CD8-positive, alpha-beta T cell (primary cell): ENCODE measurements at regions of chr4 and their contacts with region 1.

Region 1: GRCh38 chr4:153573881-153574802 is 108.0 kb downstream of the TMEM131L start:
- DNase-seq: peak; percentile 29 to 84 (median 73)
- ATAC-seq: peak; percentile 96
- H3K4me3 ChIP-seq: no peak overlapping the region
- H3K4me3 Mint-ChIP-seq: peak overlapping the region; percentile 9
- H3K27ac ChIP-seq: peak overlapping the region in 1 of 2 experiments; percentile 29
- H3K27ac Mint-ChIP-seq: peak overlapping the region; percentile 81
- H3K4me1 ChIP-seq: peaks cover 27% of the 10 kb centered on the region
- H3K4me1 Mint-ChIP-seq: peaks cover 61% of the 10 kb centered on the region
- H3K27me3 ChIP-seq: no peaks in the 10 kb centered on the region
- H3K27me3 Mint-ChIP-seq: no peaks in the 10 kb centered on the region
- CTCF ChIP-seq: peak; percentile 73

Region 2: DNA sequence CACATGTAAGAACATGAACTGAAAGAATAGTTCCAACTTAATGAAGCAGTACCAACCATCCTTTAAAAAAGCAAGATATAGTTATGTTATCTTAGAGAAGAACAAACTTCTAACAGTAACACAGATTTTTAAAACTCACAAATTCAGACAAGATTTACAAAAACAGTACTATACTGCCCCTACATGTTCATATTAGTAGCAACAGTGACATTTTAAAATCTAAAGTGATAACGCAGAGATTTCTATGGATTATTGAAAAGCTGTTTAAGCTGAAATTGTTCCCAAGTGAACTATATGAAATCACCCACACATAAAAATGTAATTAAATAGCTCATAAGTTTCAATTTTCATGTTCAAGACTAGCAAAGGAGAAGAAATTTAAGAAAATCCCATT is 1204.2 kb before region 1 on chr4:
- CTCF ChIA-PET with region 1: no interaction called
- POLR2A ChIA-PET with region 1: no interaction called
- intact Hi-C with region 1: no loop called
- DNase-seq: peak in 1 of 9 experiments; percentile 26
- ATAC-seq: no peak
- H3K4me3 ChIP-seq: no peak overlapping the region
- H3K4me3 Mint-ChIP-seq: no peak overlapping the region
- H3K27ac ChIP-seq: no peak overlapping the region
- H3K27ac Mint-ChIP-seq: no peak overlapping the region
- H3K4me1 ChIP-seq: no peaks in the 10 kb centered on the region
- H3K4me1 Mint-ChIP-seq: peaks cover 13% of the 10 kb centered on the region
- H3K27me3 ChIP-seq: no peaks in the 10 kb centered on the region
- H3K27me3 Mint-ChIP-seq: no peaks in the 10 kb centered on the region
- CTCF ChIP-seq: peak; percentile 53

Region 3: DNA sequence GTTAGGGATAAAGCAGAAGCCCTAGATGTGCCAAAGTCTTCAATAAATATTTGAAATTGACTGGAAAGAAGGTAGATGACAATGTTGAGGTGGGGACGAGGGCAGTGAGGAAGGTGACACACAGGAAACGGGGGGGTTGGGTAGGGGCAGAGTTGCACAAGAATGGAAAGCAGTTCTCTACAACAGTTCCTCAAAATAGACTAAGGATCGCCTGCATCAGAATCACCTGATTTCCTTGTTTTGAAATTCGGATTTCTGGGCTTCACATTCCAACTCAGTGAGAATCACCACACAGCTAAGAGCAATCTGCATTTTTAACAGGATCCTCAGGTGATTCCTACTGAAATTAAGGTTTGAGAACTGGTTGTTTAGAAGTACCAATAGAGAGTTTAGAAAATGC is 723.8 kb before region 1 on chr4:
- CTCF ChIA-PET with region 1: no interaction called
- POLR2A ChIA-PET with region 1: no interaction called
- intact Hi-C with region 1: loop called in 1 of 2 experiments (anchors 2 kb)
- DNase-seq: peak in 7 of 9 experiments; percentile 18 to 57 (median 33)
- ATAC-seq: peak; percentile 69
- H3K4me3 ChIP-seq: no peak overlapping the region
- H3K4me3 Mint-ChIP-seq: no peak overlapping the region
- H3K27ac ChIP-seq: no peak overlapping the region
- H3K27ac Mint-ChIP-seq: no peak overlapping the region
- H3K4me1 ChIP-seq: peaks cover 4% of the 10 kb centered on the region
- H3K4me1 Mint-ChIP-seq: peaks cover 24% of the 10 kb centered on the region
- H3K27me3 ChIP-seq: no peaks in the 10 kb centered on the region
- H3K27me3 Mint-ChIP-seq: no peaks in the 10 kb centered on the region
- CTCF ChIP-seq: no peak

Region 4: GRCh38 chr4:153426207-153426885 is 147.8 kb before region 1 on chr4:
- CTCF ChIA-PET with region 1: interaction called, 18 read pairs
- POLR2A ChIA-PET with region 1: interaction called, 6 read pairs
- intact Hi-C with region 1: loop called in 1 of 2 experiments (anchors 1 kb)
- DNase-seq: peak in 4 of 9 experiments; percentile 9 to 78 (median 40)
- ATAC-seq: peak; percentile 78
- H3K4me3 ChIP-seq: peak overlapping the region in 1 of 2 experiments; percentile 33
- H3K4me3 Mint-ChIP-seq: peak overlapping the region; percentile 40
- H3K27ac ChIP-seq: peak overlapping the region; percentile 55 to 77
- H3K27ac Mint-ChIP-seq: peak overlapping the region; percentile 83
- H3K4me1 ChIP-seq: peaks cover 44% of the 10 kb centered on the region
- H3K4me1 Mint-ChIP-seq: peaks cover 53% of the 10 kb centered on the region
- H3K27me3 ChIP-seq: no peaks in the 10 kb centered on the region
- H3K27me3 Mint-ChIP-seq: no peaks in the 10 kb centered on the region
- CTCF ChIP-seq: no peak

Region 5: GRCh38 chr4:153448003-153448731 is 126.0 kb before region 1 on chr4:
- CTCF ChIA-PET with region 1: interaction called, 11 read pairs
- POLR2A ChIA-PET with region 1: interaction called, 3 read pairs
- intact Hi-C with region 1: no loop called
- DNase-seq: no peak
- ATAC-seq: no peak
- H3K4me3 ChIP-seq: no peak overlapping the region
- H3K4me3 Mint-ChIP-seq: no peak overlapping the region
- H3K27ac ChIP-seq: no peak overlapping the region
- H3K27ac Mint-ChIP-seq: no peak overlapping the region
- H3K4me1 ChIP-seq: peaks cover 14% of the 10 kb centered on the region
- H3K4me1 Mint-ChIP-seq: peaks cover 21% of the 10 kb centered on the region
- H3K27me3 ChIP-seq: no peaks in the 10 kb centered on the region
- H3K27me3 Mint-ChIP-seq: no peaks in the 10 kb centered on the region
- CTCF ChIP-seq: no peak

Region 6: GRCh38 chr4:153488006-153488891 is 85.9 kb before region 1 on chr4:
- CTCF ChIA-PET with region 1: interaction called, 18 read pairs
- POLR2A ChIA-PET with region 1: interaction called, 4 read pairs
- intact Hi-C with region 1: loop called in 1 of 2 experiments (anchors 5 kb)
- DNase-seq: peak; percentile 44 to 94 (median 73)
- ATAC-seq: peak; percentile 66
- H3K4me3 ChIP-seq: peak overlapping the region; percentile 51 to 57
- H3K4me3 Mint-ChIP-seq: peak overlapping the region; percentile 78
- H3K27ac ChIP-seq: peak overlapping the region; percentile 54 to 94
- H3K27ac Mint-ChIP-seq: peak overlapping the region; percentile 95
- H3K4me1 ChIP-seq: peaks cover 87% of the 10 kb centered on the region
- H3K4me1 Mint-ChIP-seq: peaks cover 85% of the 10 kb centered on the region
- H3K27me3 ChIP-seq: no peaks in the 10 kb centered on the region
- H3K27me3 Mint-ChIP-seq: no peaks in the 10 kb centered on the region
- CTCF ChIP-seq: no peak

Region 7: DNA sequence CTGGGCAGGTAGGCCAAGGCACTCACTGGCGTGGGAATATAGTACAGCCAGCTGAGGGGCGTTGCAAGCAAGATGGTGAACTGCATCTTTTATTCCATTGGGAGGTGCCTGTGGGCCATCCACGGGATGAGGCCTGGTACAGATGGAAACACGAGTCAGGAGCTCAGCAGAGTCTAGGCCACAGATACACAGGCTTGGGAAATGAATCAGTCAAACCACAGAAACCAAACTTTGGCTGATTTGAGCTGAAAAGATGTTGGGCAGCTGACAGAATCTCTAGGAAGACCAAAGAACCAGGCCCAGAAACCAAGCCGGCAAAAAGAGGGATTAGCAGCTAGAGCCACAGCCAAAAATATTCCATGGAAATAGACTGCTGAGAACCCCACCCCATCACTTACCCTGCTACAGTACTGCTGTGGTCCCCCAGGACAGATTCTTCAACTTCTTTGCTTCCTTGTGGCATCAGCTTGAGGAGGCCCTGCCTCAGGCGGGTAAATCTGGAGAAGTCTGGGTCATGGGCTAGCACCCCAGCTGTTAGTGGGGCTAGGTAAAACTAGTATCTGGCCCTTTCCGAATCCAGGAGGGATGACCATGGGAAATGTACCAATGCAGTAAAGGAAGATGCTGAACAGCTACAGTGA is 32.6 kb before region 1 on chr4:
- CTCF ChIA-PET with region 1: interaction called, 14 read pairs
- POLR2A ChIA-PET with region 1: interaction called, 4 read pairs
- intact Hi-C with region 1: no loop called
- DNase-seq: no peak
- ATAC-seq: no peak
- H3K4me3 ChIP-seq: no peak overlapping the region
- H3K4me3 Mint-ChIP-seq: no peak overlapping the region
- H3K27ac ChIP-seq: peak overlapping the region in 1 of 2 experiments; percentile 23
- H3K27ac Mint-ChIP-seq: peak overlapping the region; percentile 38
- H3K4me1 ChIP-seq: peaks cover 77% of the 10 kb centered on the region
- H3K4me1 Mint-ChIP-seq: peaks cover 92% of the 10 kb centered on the region
- H3K27me3 ChIP-seq: no peaks in the 10 kb centered on the region
- H3K27me3 Mint-ChIP-seq: no peaks in the 10 kb centered on the region
- CTCF ChIP-seq: no peak

Region 8: GRCh38 chr4:153750197-153750817 is 176.2 kb after region 1 on chr4:
- CTCF ChIA-PET with region 1: no interaction called
- POLR2A ChIA-PET with region 1: no interaction called
- intact Hi-C with region 1: loop called in 1 of 2 experiments (anchors 2 kb)
- DNase-seq: peak; percentile 21 to 70 (median 56)
- ATAC-seq: peak; percentile 64
- H3K4me3 ChIP-seq: no peak overlapping the region
- H3K4me3 Mint-ChIP-seq: no peak overlapping the region
- H3K27ac ChIP-seq: no peak overlapping the region
- H3K27ac Mint-ChIP-seq: no peak overlapping the region
- H3K4me1 ChIP-seq: peaks cover 10% of the 10 kb centered on the region
- H3K4me1 Mint-ChIP-seq: peaks cover 12% of the 10 kb centered on the region
- H3K27me3 ChIP-seq: no peaks in the 10 kb centered on the region
- H3K27me3 Mint-ChIP-seq: peaks cover 4% of the 10 kb centered on the region
- CTCF ChIP-seq: peak; percentile 76

Region 9: GRCh38 chr4:155119006-155119405 is 1544.9 kb after region 1 on chr4:
- CTCF ChIA-PET with region 1: no interaction called
- POLR2A ChIA-PET with region 1: no interaction called
- intact Hi-C with region 1: no loop called
- DNase-seq: no peak
- ATAC-seq: no peak
- H3K4me3 ChIP-seq: no peak overlapping the region
- H3K4me3 Mint-ChIP-seq: no peak overlapping the region
- H3K27ac ChIP-seq: no peak overlapping the region
- H3K27ac Mint-ChIP-seq: no peak overlapping the region
- H3K4me1 ChIP-seq: no peaks in the 10 kb centered on the region
- H3K4me1 Mint-ChIP-seq: no peaks in the 10 kb centered on the region
- H3K27me3 ChIP-seq: no peaks in the 10 kb centered on the region
- H3K27me3 Mint-ChIP-seq: no peaks in the 10 kb centered on the region
- CTCF ChIP-seq: no peak